ENCODE measurements at regions of chr7 and their contacts with region 1.

Region 1: GRCh38 chr7:108452722-108453121 is 3.5 kb downstream of the NRCAM start:
- DNase-seq: peak; percentile 32
- ATAC-seq: peak; percentile 38
- H3K4me3 Mint-ChIP-seq: no peak overlapping the region
- H3K27ac Mint-ChIP-seq: no peak overlapping the region
- H3K4me1 Mint-ChIP-seq: peaks cover 38% of the 10 kb centered on the region
- H3K27me3 Mint-ChIP-seq: peaks cover 13% of the 10 kb centered on the region
- CTCF ChIP-seq: peak; percentile 71

Region 2: DNA sequence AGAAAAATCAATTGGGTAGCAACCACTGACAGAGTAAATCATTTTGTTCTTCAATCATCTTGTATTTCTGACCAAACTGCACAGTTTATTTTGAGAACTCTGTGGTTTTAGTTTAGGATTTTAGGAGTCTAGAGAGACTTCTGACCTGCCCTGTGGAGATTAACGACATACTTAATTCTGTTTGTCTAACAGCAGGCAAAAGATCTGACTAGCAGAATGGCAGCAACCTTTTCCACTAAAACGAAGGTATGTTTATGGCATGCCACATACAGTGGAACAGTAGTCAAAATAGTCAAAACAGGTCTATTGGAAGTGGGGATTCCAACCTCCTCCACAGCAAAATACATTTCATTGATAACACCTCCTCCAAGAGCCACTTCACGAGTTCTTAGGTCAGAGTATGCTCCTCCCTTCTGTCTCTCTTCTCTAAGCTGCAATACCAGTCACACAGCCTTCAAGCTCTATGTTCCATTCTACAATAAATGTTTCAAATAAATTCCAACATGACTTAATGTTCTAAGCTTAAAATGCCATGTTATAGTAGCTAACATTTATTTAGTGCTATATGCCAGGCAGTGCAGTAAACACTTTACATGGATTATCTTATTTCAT is 30.9 kb before region 1 on chr7:
- CTCF ChIA-PET with region 1: interaction called, 15 read pairs
- POLR2A ChIA-PET with region 1: no interaction called
- intact Hi-C with region 1: no loop called
- DNase-seq: no peak
- ATAC-seq: no peak
- H3K4me3 Mint-ChIP-seq: no peak overlapping the region
- H3K27ac Mint-ChIP-seq: no peak overlapping the region
- H3K4me1 Mint-ChIP-seq: peaks cover 53% of the 10 kb centered on the region
- H3K27me3 Mint-ChIP-seq: peaks cover 13% of the 10 kb centered on the region
- CTCF ChIP-seq: no peak

Region 3: DNA sequence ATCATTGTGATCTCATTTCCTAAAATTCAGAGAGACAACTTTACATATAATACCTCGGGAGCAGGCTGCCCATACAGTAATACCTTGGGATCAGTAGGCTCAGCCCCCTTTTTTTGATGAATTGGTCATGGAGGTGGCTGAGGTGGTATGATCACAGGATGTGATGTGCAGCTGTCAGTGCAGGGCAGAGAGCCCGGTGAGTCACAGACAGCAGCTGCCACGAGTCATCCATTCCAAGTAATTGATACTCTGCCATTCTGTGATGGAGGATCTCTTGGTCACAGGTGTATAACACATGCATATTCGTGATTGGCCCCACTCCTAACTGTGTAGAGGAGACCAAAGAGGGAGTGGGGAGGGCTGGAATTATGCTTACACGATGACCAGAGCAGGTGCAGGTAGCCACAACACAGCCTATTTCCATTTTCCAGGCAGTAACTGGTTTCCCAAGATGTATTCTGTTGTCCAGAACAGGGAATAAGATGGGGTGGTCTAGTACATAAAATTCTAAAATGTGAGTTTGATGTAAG is 10.6 kb before region 1 on chr7:
- CTCF ChIA-PET with region 1: interaction called, 35 read pairs
- POLR2A ChIA-PET with region 1: interaction called, 7 read pairs
- intact Hi-C with region 1: no loop called
- DNase-seq: peak; percentile 84
- ATAC-seq: peak; percentile 99
- H3K4me3 Mint-ChIP-seq: no peak overlapping the region
- H3K27ac Mint-ChIP-seq: peak overlapping the region; percentile 82
- H3K4me1 Mint-ChIP-seq: peaks cover 19% of the 10 kb centered on the region
- H3K27me3 Mint-ChIP-seq: peaks cover 2% of the 10 kb centered on the region
- CTCF ChIP-seq: no peak

Region 4: DNA sequence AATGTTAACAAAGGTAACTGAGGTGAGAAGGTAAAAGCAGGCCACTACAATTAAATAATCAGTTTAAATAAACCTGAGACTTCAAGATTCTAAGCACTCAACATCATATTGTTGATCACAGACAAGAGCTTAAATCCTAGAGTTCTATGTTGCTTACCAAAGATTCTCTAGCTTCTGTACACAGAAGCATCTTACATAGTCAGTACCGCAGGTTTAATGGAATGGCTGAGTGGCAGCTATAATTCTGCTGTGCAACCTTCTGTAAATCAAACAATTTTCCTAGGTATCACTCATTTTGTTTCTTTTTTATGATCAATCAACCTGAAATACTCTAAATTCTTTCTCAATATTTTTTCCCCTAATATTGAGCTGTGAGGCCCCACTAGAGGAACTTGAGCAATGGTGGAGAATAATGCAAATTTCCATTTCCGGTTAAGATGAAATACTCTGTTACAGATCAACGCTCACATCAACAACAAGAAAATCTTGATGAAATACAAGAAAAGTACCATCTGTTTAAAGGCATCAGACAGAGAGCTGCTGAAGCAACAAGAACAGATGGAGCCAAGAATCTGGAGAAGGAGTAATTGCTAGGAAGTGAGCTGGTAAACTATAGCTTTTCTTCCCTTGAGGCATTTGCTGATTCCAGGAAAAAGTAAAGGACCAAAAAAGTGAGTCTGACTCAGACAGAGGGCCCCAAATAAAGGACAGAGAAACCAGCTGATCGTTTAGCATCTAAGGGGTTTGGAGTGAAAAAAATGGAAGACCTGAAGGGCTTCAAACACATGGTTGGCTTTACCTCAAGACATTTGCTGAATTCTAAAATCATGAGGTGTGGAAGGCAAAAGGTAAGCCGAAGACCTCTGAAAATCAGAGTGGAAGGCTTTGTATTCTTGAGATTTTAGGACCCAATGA is 50.6 kb after region 1 on chr7:
- CTCF ChIA-PET with region 1: interaction called, 26 read pairs
- POLR2A ChIA-PET with region 1: no interaction called
- intact Hi-C with region 1: loop called (anchors 5 kb)
- DNase-seq: no peak
- ATAC-seq: no peak
- H3K4me3 Mint-ChIP-seq: no peak overlapping the region
- H3K27ac Mint-ChIP-seq: peak overlapping the region; percentile 32
- H3K4me1 Mint-ChIP-seq: peaks cover 16% of the 10 kb centered on the region
- H3K27me3 Mint-ChIP-seq: no peaks in the 10 kb centered on the region
- CTCF ChIP-seq: no peak